ENCODE measurements at regions of chr21 and their contacts with region 1.

Region 1: GRCh38 chr21:37009740-37010341 is 3.3 kb downstream of the RIPPLY3 start:
- DNase-seq: peak; percentile 88
- H3K4me3 Mint-ChIP-seq: peak overlapping the region; percentile 53
- H3K27ac Mint-ChIP-seq: peak overlapping the region; percentile 15
- H3K4me1 Mint-ChIP-seq: peaks cover 16% of the 10 kb centered on the region
- H3K27me3 Mint-ChIP-seq: peaks cover 37% of the 10 kb centered on the region

Region 2: GRCh38 chr21:36934864-36935420 is 74.9 kb before region 1 on chr21:
- CTCF ChIA-PET with region 1: interaction called, 21 read pairs
- POLR2A ChIA-PET with region 1: no interaction called
- intact Hi-C with region 1: no loop called
- DNase-seq: no peak
- H3K4me3 Mint-ChIP-seq: no peak overlapping the region
- H3K27ac Mint-ChIP-seq: no peak overlapping the region
- H3K4me1 Mint-ChIP-seq: no peaks in the 10 kb centered on the region
- H3K27me3 Mint-ChIP-seq: no peaks in the 10 kb centered on the region

Region 3: DNA sequence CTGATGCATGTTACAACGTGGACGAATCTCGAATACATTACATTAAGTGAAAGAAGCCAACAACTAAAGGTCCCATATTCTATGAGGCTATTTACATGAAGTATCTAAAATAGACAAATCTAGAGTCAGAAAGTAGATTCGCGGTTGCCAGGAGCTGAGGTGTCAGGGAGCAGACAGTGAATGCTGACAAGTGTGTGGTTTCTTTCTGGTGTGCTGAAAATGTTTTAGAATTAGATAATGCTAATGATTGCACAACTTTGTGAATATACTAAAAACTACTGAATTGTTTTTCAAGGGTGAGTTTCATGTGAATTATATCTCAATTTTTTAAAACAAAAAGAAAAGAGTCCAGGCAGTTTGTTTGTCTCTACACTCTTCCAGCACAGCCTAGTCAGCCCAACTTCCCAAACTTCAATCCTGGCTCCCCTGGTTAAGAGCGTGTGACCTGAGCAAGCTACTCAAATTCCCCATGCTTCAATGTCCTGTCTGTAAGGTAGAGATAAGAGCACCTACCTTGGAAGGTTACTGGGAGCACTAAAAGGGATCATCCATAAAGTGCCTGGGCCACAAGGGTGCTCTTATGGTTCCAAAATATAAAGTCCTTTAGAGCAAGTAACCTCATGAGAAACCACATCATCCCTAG is 64.2 kb before region 1 on chr21:
- CTCF ChIA-PET with region 1: interaction called, 21 read pairs
- POLR2A ChIA-PET with region 1: no interaction called
- intact Hi-C with region 1: no loop called
- DNase-seq: no peak
- H3K4me3 Mint-ChIP-seq: no peak overlapping the region
- H3K27ac Mint-ChIP-seq: no peak overlapping the region
- H3K4me1 Mint-ChIP-seq: no peaks in the 10 kb centered on the region
- H3K27me3 Mint-ChIP-seq: no peaks in the 10 kb centered on the region

Region 4: DNA sequence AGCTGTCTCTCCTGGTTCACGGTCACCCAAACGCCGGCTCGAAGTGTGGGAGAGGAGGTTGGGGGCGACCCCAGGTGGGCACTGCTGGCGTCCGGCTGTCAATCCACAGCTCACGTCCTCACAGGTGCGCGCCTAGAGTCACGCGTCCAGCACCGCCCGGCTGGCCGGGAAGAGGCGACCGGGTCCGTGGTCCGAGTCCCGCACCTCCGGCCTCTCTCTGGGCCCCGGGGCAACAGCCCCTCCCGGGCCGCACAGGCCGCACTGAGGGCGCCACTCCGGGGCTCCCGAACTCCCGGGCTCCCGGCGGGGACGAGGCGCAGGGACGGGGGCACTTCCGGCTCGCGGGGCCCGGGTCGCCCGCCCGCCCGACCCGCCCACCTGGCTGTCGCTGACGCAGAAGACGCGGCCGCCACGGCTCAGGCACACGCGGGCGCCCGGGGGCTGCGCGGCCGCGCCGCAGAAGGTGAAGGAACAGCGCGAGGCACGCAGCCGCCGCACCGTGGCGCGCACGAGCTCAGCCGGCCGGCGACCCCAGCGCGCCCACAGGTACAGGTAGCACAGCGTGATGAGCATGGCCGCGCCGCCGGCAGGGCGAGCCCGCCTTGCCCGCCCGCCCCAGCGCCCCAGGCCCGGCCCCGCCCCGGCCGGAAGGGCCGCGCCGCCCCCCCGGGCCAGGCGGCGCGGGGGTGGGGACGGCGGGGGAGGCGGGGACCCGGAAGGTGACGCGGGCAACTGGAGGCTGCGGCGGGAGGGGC is 43.6 kb before region 1 on chr21 and contains the start of gene HLCS:
- CTCF ChIA-PET with region 1: interaction called, 12 read pairs
- POLR2A ChIA-PET with region 1: interaction called, 3 read pairs
- intact Hi-C with region 1: loop called (anchors 5 kb)
- DNase-seq: peak; percentile 82
- H3K4me3 Mint-ChIP-seq: peak within 1 kb of the TSS; percentile 84
- H3K27ac Mint-ChIP-seq: peak within 1 kb of the TSS; percentile 82
- H3K4me1 Mint-ChIP-seq: peaks cover 12% of the 10 kb centered on the region
- H3K27me3 Mint-ChIP-seq: no peaks in the 10 kb centered on the region
- total RNA-seq, gene HLCS: 12.7 to 17.5 TPM

Region 5: DNA sequence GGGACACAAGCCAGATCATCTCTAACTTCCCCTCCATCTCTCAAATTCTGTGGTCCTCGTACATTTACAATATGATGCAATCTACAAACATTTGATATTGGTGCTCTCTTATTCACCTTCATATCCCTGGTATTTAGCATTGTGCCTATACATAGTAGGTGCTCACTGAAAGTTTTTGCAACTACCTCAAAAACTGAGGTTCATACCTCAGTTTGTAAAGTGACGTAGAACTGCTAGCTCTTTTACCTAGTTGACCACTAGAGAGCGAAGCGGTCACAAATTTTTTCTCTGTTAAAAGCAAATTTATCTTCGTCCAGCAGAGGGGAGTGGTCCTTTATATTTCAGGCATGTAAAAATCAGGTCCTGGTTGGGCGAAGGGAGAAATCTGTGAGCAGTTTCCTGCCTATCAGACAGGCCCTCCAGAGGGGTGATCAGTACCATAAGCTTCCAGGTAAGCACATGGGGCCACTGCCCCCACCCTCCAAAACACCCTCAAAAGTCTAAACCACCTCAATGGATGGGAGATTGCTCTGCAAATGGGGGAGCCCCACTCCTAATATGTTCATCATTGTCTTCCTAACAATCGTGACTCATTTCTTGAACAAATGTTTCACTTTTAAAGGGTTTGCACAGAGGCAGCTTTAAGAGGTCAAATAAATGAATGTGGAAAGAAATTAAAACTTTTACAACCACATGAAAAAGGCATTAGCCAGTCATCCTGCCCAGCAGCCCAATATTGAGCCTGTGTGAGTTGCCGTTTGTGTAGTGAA is 32.8 kb before region 1 on chr21:
- CTCF ChIA-PET with region 1: interaction called, 15 read pairs
- POLR2A ChIA-PET with region 1: no interaction called
- intact Hi-C with region 1: loop called (anchors 1 kb)
- DNase-seq: peak; percentile 63
- H3K4me3 Mint-ChIP-seq: no peak overlapping the region
- H3K27ac Mint-ChIP-seq: peak overlapping the region; percentile 40
- H3K4me1 Mint-ChIP-seq: peaks cover 21% of the 10 kb centered on the region
- H3K27me3 Mint-ChIP-seq: peaks cover 11% of the 10 kb centered on the region

Measured in activated CD4-positive, alpha-beta memory T cell treated with anti-CD3 and anti-CD28 coated beads for 36 hours (primary cell).